Left lung (tissue), 14 donors: ENCODE measurements at regions of chr18 and their contacts with region 1.

Region 1: DNA sequence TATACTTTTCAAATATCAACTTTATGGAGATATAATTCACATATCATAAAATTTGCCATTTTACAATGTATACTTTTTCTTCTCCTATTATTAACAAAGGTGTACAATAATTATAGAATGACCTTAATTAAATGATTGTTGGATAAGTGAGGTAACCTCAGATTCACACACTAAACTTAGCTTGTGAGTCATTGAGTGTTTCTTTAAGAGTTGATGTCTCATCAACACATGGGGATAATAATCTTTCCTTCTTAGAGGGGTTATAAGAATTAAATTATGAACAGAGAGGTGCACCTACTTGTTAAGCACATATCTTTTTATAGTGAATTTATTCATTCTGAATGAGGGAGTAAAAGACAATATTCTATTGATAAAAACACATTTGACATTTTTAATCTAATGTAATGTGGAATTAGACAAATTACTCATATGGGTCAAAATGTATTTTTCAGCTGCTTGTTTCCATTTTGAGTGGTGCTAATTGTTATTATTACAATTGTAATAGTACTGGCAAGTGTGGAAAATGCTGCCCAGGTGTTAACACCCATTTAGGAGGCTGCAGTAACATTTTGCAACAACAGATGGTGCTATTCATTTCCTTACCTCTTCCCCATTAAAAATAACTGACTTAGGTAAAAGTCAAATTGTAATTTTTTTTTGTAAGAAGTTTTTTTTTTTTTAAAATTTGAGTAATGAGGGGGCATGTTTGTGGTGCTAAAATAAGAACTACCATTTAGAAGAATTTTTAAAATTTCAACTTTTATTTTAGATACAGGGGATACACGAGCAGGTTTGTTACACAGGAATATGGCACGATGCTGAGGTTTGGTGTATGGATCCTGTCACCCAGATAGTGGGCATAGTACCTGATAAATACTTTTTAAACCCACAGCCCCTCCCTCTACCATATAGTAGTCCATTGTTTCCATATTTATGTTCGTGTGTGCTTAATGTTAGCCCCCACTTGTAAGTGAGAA is 32.1 kb upstream of the DYNAP start:
- DNase-seq: peak in 1 of 4 donors; percentile 16
- ATAC-seq: peak; percentile 69
- H3K4me3 ChIP-seq: no peak overlapping the region
- H3K27ac ChIP-seq: no peak overlapping the region
- H3K4me1 ChIP-seq: no peaks in the 10 kb centered on the region
- H3K27me3 ChIP-seq: no peaks in the 10 kb centered on the region
- CTCF ChIP-seq: peak; percentile 49 to 74

Region 2: GRCh38 chr18:54662986-54663385 is 104.1 kb after region 1 on chr18:
- intact Hi-C with region 1: loop called in 1 of 2 experiments (anchors 10 kb)
- DNase-seq: no peak
- ATAC-seq: no peak
- H3K4me3 ChIP-seq: no peak overlapping the region
- H3K27ac ChIP-seq: no peak overlapping the region
- H3K4me1 ChIP-seq: no peaks in the 10 kb centered on the region
- H3K27me3 ChIP-seq: no peaks in the 10 kb centered on the region
- CTCF ChIP-seq: no peak